Left ventricle myocardium superior (tissue), 1 donor: ENCODE measurements at regions of chr3 and their contacts with region 1.

Region 1: DNA sequence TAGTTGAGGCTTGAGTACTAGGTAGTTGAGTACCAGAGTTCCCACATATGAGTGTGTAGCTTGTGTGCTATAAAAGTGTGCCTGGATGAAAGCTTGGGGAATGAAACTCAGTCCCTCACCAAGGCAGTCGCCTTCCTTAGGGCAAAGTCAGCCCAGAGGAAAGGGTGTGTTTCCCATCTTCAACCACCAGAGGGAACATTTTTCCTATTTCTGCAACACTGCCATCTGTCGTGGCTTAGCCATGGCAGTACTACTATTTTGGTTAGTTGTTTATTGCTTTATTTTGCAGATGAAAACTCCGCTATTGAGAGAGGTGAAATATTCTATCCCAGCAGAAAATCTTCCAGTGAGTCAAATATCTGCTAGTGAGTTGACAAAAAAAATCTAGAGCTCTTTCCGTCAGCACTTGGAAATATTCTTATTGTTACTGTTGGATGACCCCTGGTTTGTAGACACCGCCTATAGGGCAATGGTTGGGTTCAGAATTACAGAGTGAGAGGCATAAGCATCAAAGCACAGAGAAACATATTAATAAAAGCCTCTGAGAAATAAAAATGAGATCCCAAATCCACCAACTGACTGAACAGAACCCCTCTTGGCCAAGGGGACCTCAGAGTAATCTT is 239.9 kb downstream of the CPNE4 start:
- DNase-seq: no peak
- ATAC-seq: peak; percentile 86

Region 2: GRCh38 chr3:132029182-132029902 is 234.5 kb after region 1 on chr3:
- intact Hi-C with region 1: loop called (anchors 5 kb)
- DNase-seq: peak; percentile 86
- ATAC-seq: peak; percentile 86